ENCODE measurements at regions of chr6 and their contacts with region 1.

Region 1: DNA sequence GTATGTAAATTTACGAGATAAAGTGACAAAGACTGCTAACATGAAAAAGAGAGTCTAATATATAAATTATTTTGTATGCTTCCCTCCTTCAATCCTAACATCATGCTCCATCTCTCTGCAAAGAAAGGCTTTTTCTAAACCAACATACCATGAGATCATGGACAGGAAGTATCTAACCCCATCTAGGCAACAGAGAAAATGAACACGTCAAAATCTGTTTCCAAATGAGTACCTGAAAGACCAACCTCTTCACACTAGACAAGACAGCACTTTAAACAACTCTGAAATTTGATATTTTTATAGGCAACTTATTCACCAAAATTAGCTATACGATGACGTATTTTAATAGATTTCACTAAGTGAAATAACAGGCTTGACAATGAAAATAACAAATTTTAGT is 54.6 kb downstream of the MAN1A1 start:
- DNase-seq: no peak
- H3K4me3 Mint-ChIP-seq: peak overlapping the region; percentile 1
- H3K27ac Mint-ChIP-seq: peak overlapping the region; percentile 10
- H3K4me1 Mint-ChIP-seq: peaks cover 25% of the 10 kb centered on the region
- H3K27me3 Mint-ChIP-seq: no peaks in the 10 kb centered on the region

Region 2: GRCh38 chr6:119261945-119262286 is 33.1 kb before region 1 on chr6:
- intact Hi-C with region 1: loop called (anchors 5 kb)
- DNase-seq: no peak
- H3K4me3 Mint-ChIP-seq: peak overlapping the region; percentile 36
- H3K27ac Mint-ChIP-seq: peak overlapping the region; percentile 91
- H3K4me1 Mint-ChIP-seq: peaks cover 27% of the 10 kb centered on the region
- H3K27me3 Mint-ChIP-seq: no peaks in the 10 kb centered on the region

Region 3: GRCh38 chr6:119308048-119308570 is 13.1 kb after region 1 on chr6:
- intact Hi-C with region 1: loop called (anchors 2 kb)
- DNase-seq: no peak
- H3K4me3 Mint-ChIP-seq: no peak overlapping the region
- H3K27ac Mint-ChIP-seq: peak overlapping the region; percentile 24
- H3K4me1 Mint-ChIP-seq: peaks cover 41% of the 10 kb centered on the region
- H3K27me3 Mint-ChIP-seq: no peaks in the 10 kb centered on the region

Region 4: DNA sequence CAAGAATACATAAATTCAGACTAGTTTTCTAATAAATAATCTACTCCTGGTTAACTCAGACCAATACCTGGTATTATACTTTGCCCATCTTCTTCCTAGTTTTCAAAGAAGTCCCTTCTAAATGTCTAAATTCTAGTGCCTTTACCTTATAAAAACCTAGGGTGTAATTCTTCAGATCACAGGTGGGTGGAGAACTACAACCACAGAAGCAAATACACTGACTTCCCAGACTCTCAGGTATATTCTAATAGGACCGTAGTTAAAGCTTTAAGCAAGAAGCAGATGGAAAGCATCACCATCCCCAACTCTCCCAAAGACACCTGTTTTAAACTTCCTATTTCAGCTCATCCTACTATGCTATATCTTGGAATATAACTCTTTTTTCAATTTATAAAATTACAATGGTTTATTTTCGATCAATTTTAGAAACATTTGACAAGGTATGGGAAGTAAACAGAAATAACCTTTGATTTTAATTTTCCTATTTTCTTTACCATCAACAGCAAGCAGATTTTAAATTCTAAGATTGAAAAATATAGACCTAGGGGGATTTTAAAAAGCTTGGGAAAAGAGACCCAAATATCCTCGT is 38.8 kb after region 1 on chr6:
- intact Hi-C with region 1: loop called (anchors 2 kb)
- DNase-seq: peak; percentile 64
- H3K4me3 Mint-ChIP-seq: no peak overlapping the region
- H3K27ac Mint-ChIP-seq: no peak overlapping the region
- H3K4me1 Mint-ChIP-seq: peaks cover 48% of the 10 kb centered on the region
- H3K27me3 Mint-ChIP-seq: no peaks in the 10 kb centered on the region

Region 5: DNA sequence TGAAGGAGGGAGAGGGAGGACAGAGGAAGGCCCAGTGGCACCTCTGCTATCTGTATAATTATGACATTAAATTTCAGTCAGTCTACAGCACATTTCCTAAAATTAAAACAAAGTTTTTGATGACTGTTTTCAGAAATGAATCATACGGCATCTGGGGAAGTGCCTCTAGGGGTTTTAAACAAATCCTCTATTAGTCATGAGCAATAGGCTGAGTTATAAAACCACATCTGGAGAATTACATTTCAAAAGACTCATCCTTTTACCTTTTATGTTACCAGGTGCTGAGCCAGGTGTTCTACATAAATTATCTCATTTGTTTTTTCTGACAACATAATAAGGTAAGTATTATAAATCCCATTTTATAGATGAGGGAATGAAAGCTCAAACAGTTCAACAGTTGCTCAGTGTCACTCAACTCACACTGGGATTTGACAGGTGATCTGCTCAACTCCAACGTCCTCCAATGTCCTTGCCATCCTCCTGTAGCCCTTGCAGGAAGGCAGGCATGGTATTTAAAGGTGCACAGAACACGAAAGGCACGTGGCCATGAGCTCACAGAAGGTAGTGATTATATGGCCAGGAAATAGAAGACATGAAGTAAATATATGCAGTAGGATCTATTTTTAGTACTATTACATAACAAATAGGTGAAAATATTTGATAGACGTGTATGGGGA is 238.8 kb after region 1 on chr6:
- intact Hi-C with region 1: no loop called
- DNase-seq: no peak
- H3K4me3 Mint-ChIP-seq: no peak overlapping the region
- H3K27ac Mint-ChIP-seq: no peak overlapping the region
- H3K4me1 Mint-ChIP-seq: peaks cover 8% of the 10 kb centered on the region
- H3K27me3 Mint-ChIP-seq: peaks cover 22% of the 10 kb centered on the region

Region 6: DNA sequence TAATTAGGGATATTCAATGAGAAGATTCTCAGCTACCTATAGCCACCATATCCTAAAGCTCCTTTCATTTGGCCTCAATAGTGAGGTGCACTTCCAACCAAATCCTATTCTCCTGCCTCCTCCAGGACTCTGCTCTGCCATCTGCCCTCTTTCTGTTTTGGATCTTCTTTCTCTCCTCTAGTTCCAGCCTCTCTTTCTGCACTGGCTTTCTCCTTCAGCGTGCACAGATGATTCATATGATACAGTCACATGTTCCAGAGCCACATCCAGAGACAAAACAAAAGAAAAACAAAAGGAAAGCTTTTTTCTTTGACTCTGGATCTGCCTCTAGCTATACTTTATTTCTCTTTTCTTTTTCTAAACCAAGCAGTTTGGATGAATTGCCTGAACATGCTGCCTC is 586.4 kb after region 1 on chr6:
- intact Hi-C with region 1: no loop called
- DNase-seq: no peak
- H3K4me3 Mint-ChIP-seq: no peak overlapping the region
- H3K27ac Mint-ChIP-seq: no peak overlapping the region
- H3K4me1 Mint-ChIP-seq: no peaks in the 10 kb centered on the region
- H3K27me3 Mint-ChIP-seq: no peaks in the 10 kb centered on the region